ENCODE measurements at regions of chr16 and their contacts with region 1.

Region 1: DNA sequence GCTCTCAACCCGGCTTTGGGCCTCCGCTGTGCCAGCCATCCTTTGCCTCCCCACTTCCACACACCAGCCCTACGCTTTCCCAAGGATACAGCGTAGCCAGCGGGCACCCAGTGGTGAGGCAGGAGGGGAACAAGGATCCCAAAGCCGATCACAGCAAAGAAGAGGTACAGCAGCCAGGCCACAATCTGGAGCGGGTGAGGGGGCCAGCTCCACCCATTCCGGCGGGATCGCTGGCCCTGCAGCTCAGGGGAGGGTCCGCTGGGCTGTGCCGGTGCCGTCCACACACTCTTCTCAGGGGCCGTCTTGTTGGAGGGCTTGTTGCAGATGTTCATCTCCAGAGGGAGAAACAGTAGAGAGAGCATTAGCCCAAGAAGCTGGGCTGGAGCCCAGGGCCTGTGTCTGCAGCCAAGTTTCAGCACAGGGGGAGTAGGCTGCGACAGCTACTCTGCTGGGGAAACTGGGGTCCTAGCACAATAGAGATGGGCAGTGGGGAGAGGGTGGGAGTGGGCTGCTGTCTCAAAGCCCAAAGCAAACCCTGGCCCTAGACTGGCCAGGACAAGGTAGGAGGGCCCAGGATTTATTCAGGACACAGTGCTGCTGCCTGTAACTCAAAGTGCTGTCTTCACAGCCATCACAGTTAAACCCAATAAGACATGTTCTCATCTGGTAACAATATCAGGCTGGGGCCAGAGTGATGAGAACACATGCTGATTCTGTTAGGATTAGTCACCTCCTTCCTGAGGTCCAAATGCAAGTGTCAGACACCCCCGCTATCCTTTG is 10.0 kb downstream of the ZDHHC1 start:
- DNase-seq: peak; percentile 53 to 87 (median 84)
- ATAC-seq: peak; percentile 55 to 59
- H3K4me3 ChIP-seq: no peak overlapping the region
- H3K27ac ChIP-seq: no peak overlapping the region
- H3K4me1 ChIP-seq: peaks cover 5% of the 10 kb centered on the region
- H3K27me3 ChIP-seq: no peaks in the 10 kb centered on the region

Region 2: GRCh38 chr16:67260426-67261075 is 145.8 kb before region 1 on chr16:
- intact Hi-C with region 1: loop called in 1 of 4 experiments (anchors 10 kb)
- DNase-seq: peak in 1 of 3 donors; percentile 24
- ATAC-seq: peak; percentile 53 to 64
- H3K4me3 ChIP-seq: no peak overlapping the region
- H3K27ac ChIP-seq: no peak overlapping the region
- H3K4me1 ChIP-seq: no peaks in the 10 kb centered on the region
- H3K27me3 ChIP-seq: no peaks in the 10 kb centered on the region

Region 3: DNA sequence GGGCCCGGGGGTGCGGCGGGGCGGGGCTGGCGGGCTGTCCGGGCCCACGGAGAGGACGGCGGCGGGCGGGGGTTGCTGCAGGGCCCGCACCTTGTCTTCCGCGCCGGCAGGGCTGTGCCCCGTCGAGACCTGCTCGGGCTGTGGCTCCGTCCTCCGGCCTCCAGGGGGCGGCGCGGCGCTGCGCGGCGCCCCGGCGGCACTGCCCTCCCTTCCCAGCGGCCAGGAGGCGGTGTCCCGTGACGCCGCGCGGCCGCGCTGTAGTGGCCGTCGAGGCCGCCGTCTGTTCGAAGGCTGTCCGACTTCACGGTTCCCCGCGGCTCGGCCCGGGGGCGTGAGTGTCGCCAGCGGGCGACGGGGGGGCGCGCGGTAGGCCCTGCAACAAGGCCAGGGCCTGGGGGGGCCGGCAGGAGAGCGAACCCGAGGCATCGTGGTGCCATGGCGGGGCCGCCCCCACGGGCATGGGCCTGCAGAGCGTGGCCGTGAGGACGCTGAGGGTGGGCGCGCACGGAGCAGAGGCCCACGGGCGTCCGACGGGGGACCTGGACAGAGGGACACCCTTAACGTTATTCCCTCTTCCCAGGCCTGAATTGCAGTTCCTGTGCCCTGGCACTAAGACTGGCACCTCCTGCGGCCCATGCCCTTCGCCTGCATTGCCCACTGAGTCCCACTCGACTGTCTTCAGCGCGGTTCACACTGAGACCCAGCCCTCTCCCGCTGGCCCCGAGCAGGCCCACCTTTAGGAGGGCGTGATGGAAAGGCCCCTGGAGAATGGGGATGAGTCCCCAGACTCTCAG is 126.8 kb before region 1 on chr16 and contains the start of gene PLEKHG4:
- intact Hi-C with region 1: loop called in 1 of 4 experiments (anchors 10 kb)
- DNase-seq: peak; percentile 69 to 90 (median 88)
- ATAC-seq: peak; percentile 83 to 88
- H3K4me3 ChIP-seq: peak within 1 kb of the TSS; percentile 59
- H3K27ac ChIP-seq: no peak within 1 kb of the TSS
- H3K4me1 ChIP-seq: peaks cover 2% of the 10 kb centered on the region
- H3K27me3 ChIP-seq: no peaks in the 10 kb centered on the region
- total RNA-seq, gene PLEKHG4: 2.2 to 2.8 (median 2.5) TPM